ENCODE measurements at regions of chr19 and their contacts with region 1.

Region 1: GRCh38 chr19:41206926-41207750 is 11.9 kb upstream of the AXL start:
- DNase-seq: peak; percentile 48
- H3K4me3 ChIP-seq: no peak overlapping the region
- H3K27ac ChIP-seq: peak overlapping the region; percentile 27 to 68 (median 32)
- H3K4me1 ChIP-seq: no peaks in the 10 kb centered on the region
- H3K27me3 ChIP-seq: no peaks in the 10 kb centered on the region
- CTCF ChIP-seq: no peak
- EP300 ChIP-seq: no peak
- POLR2A ChIP-seq: no peak

Region 2: DNA sequence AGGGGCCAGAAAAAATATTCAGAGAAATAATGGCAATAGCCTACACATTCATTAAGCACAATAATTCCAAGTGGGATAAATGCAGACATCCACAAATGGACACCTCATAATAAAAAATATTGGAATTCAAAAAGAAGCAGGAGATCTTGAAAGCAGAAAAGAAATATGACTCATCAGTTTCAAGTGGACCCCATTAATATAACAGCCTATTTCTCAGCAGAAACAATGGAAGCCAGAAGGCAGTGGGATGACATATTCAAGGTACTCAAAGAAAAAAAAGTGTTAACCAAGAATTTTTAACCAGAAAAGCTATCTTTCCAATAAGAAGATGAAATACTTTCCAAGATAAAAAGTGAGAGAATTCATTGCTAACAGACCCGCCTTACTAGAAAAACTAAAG is 167.3 kb before region 1 on chr19:
- in situ Hi-C with region 1: no loop called
- intact Hi-C with region 1: no loop called
- DNase-seq: no peak
- H3K4me3 ChIP-seq: no peak overlapping the region
- H3K27ac ChIP-seq: no peak overlapping the region
- H3K4me1 ChIP-seq: no peaks in the 10 kb centered on the region
- H3K27me3 ChIP-seq: no peaks in the 10 kb centered on the region
- CTCF ChIP-seq: no peak
- EP300 ChIP-seq: no peak
- POLR2A ChIP-seq: no peak

Region 3: DNA sequence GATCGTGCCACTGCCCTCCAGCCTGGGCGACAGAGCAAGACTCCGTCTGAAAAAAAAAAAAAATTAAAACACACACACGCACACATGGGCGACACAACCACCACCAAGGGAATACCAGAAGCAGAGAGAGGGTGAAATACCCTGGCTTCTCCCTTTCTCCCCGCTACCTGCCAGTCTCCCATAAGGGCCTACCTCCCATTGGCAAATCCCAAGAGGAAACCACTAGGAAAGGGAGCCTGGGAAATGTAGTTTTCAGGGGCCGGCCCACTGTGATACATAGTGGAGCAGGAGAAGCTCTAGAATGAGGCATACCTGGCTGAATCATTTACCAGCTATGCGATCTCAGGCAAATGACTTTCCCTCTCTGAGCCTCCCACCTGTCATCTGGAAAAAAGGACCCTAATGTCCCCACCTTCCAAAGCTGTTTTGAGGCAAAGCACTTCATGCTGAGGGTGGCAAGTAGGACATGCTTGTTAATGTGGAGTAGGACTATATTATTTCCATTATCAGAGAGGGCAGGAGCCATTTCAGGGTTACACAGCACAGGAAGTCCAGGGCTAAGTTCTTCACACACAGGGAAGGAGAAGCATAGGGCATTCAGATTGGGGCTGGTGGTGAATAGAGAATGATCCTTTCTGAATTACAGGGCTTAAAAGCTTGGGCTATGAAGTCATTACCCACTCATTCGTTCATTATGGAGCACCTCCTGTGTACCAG is 42.7 kb after region 1 on chr19:
- in situ Hi-C with region 1: loop called in 3 of 4 experiments (anchors 5 to 10 kb)
- intact Hi-C with region 1: no loop called
- DNase-seq: no peak
- H3K4me3 ChIP-seq: no peak overlapping the region
- H3K27ac ChIP-seq: no peak overlapping the region
- H3K4me1 ChIP-seq: no peaks in the 10 kb centered on the region
- H3K27me3 ChIP-seq: no peaks in the 10 kb centered on the region
- CTCF ChIP-seq: no peak
- EP300 ChIP-seq: no peak
- POLR2A ChIP-seq: no peak

Region 4: DNA sequence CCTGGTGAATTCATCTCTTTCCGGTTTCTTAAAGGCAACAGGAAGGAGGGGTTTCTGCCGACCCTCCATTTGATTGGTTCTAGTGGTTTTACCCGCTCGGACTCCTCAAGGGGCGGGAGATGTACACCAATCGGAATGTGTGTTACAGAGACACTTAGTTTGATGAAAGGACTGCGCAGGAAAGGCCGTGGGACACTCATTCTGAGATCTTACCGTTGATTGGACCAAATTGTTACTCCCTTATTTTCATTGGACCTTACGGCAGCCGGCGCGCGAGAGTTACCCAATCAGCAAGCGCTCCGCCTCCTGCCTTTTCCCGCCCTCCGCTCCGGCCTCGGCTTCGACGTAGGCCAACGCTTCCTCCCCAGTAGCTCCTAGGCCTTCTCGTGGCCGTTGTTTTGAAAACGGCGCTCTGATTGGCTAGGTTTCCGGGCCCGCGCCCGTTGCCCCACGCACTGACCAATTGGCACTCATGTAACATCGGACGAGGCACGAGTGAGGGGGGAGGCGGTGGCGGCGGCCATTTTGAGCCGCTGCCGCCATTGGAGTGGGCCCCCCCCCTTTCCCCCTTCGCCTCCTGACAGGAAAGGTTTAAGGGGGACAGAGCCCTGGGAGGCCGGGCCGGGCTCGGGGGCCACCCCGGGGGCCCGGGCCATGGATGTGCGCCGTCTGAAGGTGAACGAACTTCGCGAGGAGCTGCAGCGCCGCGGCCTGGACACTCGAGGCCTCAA is 56.9 kb after region 1 on chr19 and contains the start of gene HNRNPUL1:
- in situ Hi-C with region 1: loop called (anchors 5 to 10 kb)
- intact Hi-C with region 1: loop called (anchors 1 kb)
- DNase-seq: peak; percentile 99
- H3K4me3 ChIP-seq: peak within 1 kb of the TSS; percentile 89 to 99 (median 98)
- H3K27ac ChIP-seq: peak within 1 kb of the TSS; percentile 99 to 100 (median 100)
- H3K4me1 ChIP-seq: peaks cover 11 to 32% (median 26%) of the 10 kb centered on the region in 4 donors
- H3K27me3 ChIP-seq: no peaks in the 10 kb centered on the region
- CTCF ChIP-seq: peak in 2 of 5 experiments; percentile 11 to 45
- EP300 ChIP-seq: no peak
- POLR2A ChIP-seq: no peak
- total RNA-seq, gene HNRNPUL1: 115 to 296 (median 145) TPM

Measured in transverse colon (tissue), 4 donors.